Esophagus muscularis mucosa (tissue), 4 donors: ENCODE measurements at regions of chr22 and their contacts with region 1.

Region 1: DNA sequence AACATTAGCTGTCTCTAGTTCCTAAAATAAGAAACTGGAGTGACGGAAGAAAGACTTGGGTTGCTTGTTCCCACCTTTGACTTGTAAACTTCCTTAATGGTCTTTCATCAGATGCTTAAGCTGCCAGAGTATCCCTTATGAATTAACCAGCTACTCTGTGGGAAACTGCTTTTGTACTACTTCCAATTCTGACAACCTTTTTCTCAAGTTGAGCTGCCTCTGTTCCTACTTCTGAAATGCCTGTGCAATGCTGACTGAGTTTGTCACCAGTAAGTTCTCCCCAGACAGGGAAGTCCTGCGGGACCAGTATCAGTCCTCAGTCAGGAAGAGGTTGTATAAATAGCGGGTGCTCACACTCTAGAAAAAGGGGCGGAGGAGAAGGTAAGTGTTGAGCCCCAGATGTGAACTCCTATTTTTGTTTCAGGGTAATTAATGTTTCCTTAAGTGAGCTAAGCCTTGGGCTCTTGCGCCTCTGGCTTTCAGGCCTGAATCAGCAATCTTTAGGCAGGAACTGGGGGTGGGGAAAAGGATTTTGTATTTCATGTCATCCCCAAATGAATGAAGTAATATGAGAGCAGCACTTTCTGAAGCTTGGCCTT is 67.2 kb downstream of the CECR2 start:
- DNase-seq: no peak
- H3K4me3 ChIP-seq: no peak overlapping the region
- H3K27ac ChIP-seq: peak overlapping the region in 2 of 4 donors; percentile 16 to 49
- H3K4me1 ChIP-seq: peaks cover 5 to 15% (median 13%) of the 10 kb centered on the region in 4 donors
- H3K27me3 ChIP-seq: no peaks in the 10 kb centered on the region
- CTCF ChIP-seq: no peak
- EP300 ChIP-seq: no peak
- POLR2A ChIP-seq: no peak

Region 2: DNA sequence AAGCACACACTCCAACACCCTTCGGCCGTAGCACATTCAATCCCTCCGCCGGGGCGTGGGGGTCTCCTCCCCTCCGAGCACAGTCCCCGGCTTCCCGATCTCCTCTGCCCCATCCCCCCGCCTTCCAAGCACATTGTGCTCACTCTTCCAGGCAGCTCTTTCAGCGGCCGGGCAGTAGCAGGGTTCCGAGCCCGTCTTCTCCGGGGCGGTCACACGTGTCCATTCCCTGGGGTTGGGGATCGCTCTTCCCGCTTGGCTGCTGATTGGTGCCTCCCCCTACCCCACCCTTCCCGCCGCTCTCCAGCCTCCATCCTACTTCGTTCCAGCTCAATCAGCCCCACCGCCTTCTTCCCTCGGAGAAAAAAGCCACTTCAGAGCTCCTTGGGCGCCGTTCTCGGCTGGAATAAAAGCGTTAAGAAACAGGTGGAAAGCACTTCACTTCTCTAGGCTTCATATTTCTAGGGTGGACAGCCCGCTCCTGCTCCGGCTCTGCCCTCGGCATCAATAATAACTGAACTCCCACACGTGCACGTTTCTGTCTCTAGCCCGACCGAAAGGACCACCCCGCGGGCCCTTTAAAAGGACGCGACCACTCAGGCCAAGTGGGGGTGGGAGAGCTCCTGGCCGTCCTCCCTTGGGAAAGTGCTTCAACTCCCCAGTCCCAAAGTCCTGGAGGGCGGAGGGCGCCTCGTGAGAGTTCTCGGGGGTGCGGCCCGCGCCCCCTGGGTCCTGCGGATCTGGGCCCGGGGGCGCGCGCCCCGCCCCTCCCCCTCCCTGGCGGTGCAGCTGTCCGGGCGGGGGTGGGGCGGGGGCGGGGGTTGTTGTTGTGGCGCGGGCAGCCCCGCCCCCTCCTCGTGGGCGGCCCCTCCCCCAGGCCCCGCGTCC is 67.7 kb before region 1 on chr22:
- intact Hi-C with region 1: loop called (anchors 5 kb)
- DNase-seq: no peak
- H3K4me3 ChIP-seq: peak overlapping the region; percentile 63 to 72 (median 68)
- H3K27ac ChIP-seq: peak overlapping the region; percentile 33 to 84 (median 76)
- H3K4me1 ChIP-seq: peaks cover 0 to 36% (median 30%) of the 10 kb centered on the region in 4 donors
- H3K27me3 ChIP-seq: peaks cover 0 to 79% (median 13%) of the 10 kb centered on the region in 4 donors
- CTCF ChIP-seq: no peak
- EP300 ChIP-seq: no peak
- POLR2A ChIP-seq: no peak